Psoas muscle (tissue), 8 donors: ENCODE measurements at regions of chr2 and their contacts with region 1.

Region 1: DNA sequence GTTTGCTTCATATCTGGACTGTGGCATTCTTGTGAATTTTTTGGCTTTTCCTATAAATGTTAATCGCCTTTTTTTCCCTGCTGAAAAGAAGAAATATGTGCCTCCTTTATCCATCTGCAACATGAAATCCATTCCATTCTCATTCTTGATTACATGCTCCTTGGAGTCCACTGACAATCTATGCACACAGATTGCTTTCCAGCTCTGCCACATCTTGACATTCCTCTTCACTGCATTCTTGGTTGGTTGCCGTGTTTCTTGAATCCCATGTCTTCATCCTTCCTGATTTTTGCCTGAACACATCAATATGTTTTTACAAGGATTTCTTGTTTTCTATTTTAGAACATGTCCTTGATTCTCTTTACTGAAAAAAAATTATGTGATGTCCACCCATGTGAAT is 26.7 kb upstream of the BIRC6 start:
- DNase-seq: no peak
- ATAC-seq: no peak
- H3K4me3 ChIP-seq: no peak overlapping the region
- H3K27ac ChIP-seq: no peak overlapping the region
- H3K4me1 ChIP-seq: no peaks in the 10 kb centered on the region
- H3K27me3 ChIP-seq: no peaks in the 10 kb centered on the region
- CTCF ChIP-seq: no peak

Region 2: GRCh38 chr2:31865215-31865614 is 464.9 kb before region 1 on chr2:
- intact Hi-C with region 1: no loop called
- DNase-seq: no peak
- ATAC-seq: no peak
- H3K4me3 ChIP-seq: no peak overlapping the region
- H3K27ac ChIP-seq: no peak overlapping the region
- H3K4me1 ChIP-seq: no peaks in the 10 kb centered on the region
- H3K27me3 ChIP-seq: no peaks in the 10 kb centered on the region
- CTCF ChIP-seq: no peak

Region 3: GRCh38 chr2:32249731-32250236 is 80.4 kb before region 1 on chr2:
- intact Hi-C with region 1: no loop called
- DNase-seq: no peak
- ATAC-seq: no peak
- H3K4me3 ChIP-seq: no peak overlapping the region
- H3K27ac ChIP-seq: no peak overlapping the region
- H3K4me1 ChIP-seq: no peaks in the 10 kb centered on the region
- H3K27me3 ChIP-seq: no peaks in the 10 kb centered on the region
- CTCF ChIP-seq: no peak

Region 4: DNA sequence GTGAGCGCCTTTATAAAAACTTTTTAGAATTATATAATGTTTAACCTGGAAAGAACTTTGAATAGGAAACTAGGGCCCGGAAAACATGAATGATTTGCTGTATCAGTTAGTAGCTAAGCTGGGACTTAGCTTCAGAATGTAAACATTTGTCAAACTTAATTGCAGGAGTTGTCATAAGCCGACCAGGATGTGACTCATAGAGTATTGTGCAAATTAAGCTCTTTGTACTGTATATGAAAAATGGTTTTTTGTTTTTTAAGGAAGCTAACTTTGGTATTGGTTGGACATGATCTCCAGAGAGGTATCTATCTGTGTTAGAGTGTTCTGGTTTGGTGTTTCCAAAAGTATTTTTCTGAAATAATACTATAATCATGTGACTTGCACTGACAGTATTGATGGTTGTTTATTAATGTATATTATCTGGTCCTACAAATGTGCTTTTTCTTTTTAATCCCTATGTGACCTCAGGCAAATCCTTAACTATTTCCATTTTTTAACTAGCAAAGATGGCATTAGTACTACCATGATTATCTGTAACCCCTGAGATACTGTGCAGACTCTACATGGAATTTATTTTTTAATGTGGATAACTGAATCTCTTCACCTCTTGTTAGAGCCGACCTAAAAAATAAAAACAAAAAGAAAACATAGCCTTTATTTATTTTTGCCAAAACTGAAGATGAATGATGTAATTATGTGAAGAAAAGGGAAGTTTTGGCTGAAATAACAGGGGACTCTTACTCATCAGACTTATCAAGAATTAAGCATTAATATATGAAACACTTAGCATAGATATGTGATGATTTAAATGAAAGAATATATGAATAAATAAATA is 40.8 kb before region 1 on chr2:
- intact Hi-C with region 1: loop called in 1 of 2 experiments (anchors 10 kb)
- DNase-seq: no peak
- ATAC-seq: peak in 1 of 4 donors; percentile 32
- H3K4me3 ChIP-seq: no peak overlapping the region
- H3K27ac ChIP-seq: no peak overlapping the region
- H3K4me1 ChIP-seq: peaks cover 14% of the 10 kb centered on the region
- H3K27me3 ChIP-seq: no peaks in the 10 kb centered on the region
- CTCF ChIP-seq: no peak

Region 5: GRCh38 chr2:32882816-32883810 is 553.0 kb after region 1 on chr2:
- intact Hi-C with region 1: no loop called
- DNase-seq: no peak
- ATAC-seq: no peak
- H3K4me3 ChIP-seq: no peak overlapping the region
- H3K27ac ChIP-seq: no peak overlapping the region
- H3K4me1 ChIP-seq: no peaks in the 10 kb centered on the region
- H3K27me3 ChIP-seq: no peaks in the 10 kb centered on the region
- CTCF ChIP-seq: no peak